ENCODE measurements at regions of chr1 and their contacts with region 1.

Region 1: GRCh38 chr1:23800400-23801337 is at the start of gene GALE:
- DNase-seq: peak; percentile 90

Region 2: DNA sequence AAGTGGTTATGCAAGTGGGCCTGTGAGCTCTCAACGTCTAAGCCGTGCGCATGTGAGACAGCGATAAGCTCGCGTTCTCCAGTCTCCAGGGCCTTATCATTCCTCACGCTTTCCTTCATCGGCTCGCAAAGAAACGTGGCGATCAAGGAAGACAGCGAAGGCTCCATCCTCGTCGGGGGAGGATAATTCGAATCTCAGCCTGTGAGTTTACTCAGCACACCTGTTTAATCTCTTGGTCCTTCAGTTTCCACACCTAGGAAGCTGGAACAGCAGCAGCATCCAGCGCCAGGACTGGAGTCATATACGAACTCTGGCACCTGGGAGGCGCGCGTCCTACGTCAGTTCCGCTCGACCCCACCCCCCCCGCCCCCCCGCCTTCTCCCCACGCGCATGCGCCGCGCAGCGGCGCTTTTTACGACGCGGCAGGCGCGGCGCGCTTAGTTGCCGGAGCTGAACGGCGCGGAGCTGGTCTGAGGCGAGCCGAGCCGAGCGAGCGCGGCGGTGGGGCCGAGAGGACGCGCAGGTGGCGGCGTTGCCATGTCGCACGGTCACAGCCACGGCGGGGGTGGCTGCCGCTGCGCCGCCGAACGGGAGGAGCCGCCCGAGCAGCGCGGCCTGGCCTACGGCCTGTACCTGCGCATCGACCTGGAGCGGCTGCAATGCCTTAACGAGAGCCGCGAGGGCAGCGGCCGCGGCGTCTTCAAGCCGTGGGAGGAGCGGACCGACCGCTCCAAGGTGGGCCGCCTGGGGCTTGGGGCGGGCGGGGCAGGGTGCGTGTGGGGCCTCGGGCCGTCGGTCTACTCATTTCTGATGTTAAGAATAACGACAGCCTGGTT is 22.5 kb before region 1 on chr1 and contains the start of gene PITHD1:
- CTCF ChIA-PET with region 1: no interaction called
- POLR2A ChIA-PET with region 1: interaction called, 18 read pairs
- DNase-seq: peak; percentile 95

Region 3: DNA sequence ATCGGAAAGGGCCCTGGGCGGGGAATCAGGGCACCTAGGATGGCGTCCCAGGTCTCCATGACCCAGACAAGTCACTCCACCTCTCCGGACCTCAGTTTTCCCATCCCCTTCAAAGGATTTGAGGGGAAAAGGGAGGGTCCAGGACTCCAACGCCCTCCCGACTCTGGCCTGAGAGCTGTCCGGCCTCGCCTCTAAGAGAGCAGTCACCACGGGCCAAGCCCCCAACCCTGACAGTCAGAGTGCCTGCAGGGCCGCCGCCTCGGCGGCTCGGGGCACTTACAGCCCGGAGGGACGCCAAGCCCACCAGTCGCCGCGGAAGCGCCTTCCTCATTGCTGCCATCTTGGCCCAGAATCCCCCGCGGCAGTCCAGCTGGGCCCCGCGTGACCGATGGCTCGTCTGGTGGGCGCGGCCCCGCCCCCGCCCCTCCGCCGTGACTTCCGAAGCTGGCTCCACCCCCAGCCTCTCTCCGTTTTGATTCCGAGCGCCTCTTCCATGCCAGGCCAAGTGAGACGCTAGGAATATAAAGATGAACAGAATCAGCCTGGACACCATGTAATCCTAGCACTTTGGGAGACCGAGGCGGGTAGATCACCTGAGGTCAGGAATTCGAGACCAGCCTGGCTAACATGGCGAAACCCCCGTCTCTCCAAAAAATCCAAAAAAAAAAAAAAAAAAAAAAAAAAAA is 24.6 kb after region 1 on chr1 and contains the start of gene HMGCL:
- CTCF ChIA-PET with region 1: no interaction called
- POLR2A ChIA-PET with region 1: interaction called, 14 read pairs
- DNase-seq: peak; percentile 94